BJ (cell line): ENCODE measurements at regions of chr11 and their contacts with region 1.

Region 1: GRCh38 chr11:59158206-59159068 is 13.5 kb upstream of the DTX4 start:
- DNase-seq: no peak
- H3K4me3 ChIP-seq: no peak overlapping the region
- H3K27me3 ChIP-seq: peaks cover 4% of the 10 kb centered on the region
- CTCF ChIP-seq: peak; percentile 76

Region 2: GRCh38 chr11:59053387-59053786 is 105.0 kb before region 1 on chr11:
- CTCF ChIA-PET with region 1: interaction called, 22 read pairs
- POLR2A ChIA-PET with region 1: no interaction called
- DNase-seq: no peak
- H3K4me3 ChIP-seq: no peak overlapping the region
- H3K27me3 ChIP-seq: 0 out of 2 replicates have a peak, but pooled peaks cover 2% of the 10 kb centered on the region
- CTCF ChIP-seq: peak; percentile 75

Region 3: DNA sequence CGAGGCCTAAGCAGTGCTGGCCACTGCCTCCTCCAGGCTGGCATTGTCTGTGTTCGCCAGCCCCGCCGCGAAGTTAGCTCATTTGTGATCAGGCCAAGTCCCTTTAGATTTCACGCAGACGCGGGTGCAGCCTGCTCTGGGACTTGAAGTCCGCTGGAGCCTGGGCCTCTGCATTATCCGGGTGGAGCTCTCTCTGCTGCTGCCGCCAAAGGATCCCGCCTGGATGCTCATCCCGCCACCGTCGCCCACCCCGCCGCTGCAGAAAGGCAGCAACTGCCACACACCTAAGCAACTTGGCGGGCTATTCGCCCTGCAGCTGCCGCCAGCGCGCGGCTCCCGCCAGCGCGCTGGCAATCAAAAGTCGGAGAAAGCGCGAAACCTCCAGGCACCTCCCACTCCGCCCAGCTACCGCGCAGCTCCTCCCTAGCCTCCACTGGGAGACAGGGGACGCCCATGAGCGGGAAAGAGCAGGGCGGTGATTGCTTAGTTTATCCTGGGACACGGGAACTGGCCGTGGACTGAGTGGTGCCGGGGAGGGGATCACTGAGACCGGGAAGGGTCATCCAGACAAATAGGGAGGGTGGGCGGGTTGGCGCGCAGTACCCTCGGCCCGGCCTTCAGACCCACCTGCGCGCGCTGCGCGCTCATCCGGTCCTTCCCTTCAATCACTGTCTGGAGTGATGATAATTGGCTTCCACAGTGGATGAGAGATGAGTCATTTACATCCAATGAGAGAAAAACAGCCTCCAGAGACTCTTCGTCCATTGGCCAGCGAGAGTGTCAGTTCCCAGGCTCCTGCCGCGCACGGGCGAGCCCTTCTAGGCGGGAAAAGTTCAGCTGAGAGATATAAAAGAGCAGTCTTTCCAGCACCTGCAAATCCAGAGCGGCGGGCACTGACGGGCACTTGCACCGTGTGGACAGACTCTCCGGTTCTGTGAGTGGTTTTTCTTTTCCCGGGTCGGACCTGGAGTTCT is 51.8 kb before region 1 on chr11 and contains the start of gene FAM111B:
- CTCF ChIA-PET with region 1: interaction called, 17 read pairs
- POLR2A ChIA-PET with region 1: no interaction called
- DNase-seq: peak; percentile 67
- H3K4me3 ChIP-seq: peak within 1 kb of the TSS; percentile 58
- H3K27me3 ChIP-seq: no peaks in the 10 kb centered on the region
- CTCF ChIP-seq: peak; percentile 32
- polyA plus RNA-seq, gene FAM111B: 0.76 and 1.9 TPM in 2 replicates

Region 4: GRCh38 chr11:59117774-59118173 is 40.7 kb before region 1 on chr11:
- CTCF ChIA-PET with region 1: no interaction called
- POLR2A ChIA-PET with region 1: no interaction called
- DNase-seq: no peak
- H3K4me3 ChIP-seq: no peak overlapping the region
- H3K27me3 ChIP-seq: no peaks in the 10 kb centered on the region
- CTCF ChIP-seq: no peak

Region 5: GRCh38 chr11:59142530-59143507 is 15.6 kb before region 1 on chr11 and contains the start of gene FAM111A:
- CTCF ChIA-PET with region 1: interaction called, 56 read pairs
- POLR2A ChIA-PET with region 1: no interaction called
- DNase-seq: peak; percentile 35
- H3K4me3 ChIP-seq: peak within 1 kb of the TSS; percentile 98
- H3K27me3 ChIP-seq: no peaks in the 10 kb centered on the region
- CTCF ChIP-seq: peak; percentile 32; the same call in 1 of the 2 replicates
- polyA plus RNA-seq, gene FAM111A: 19.7 and 30.3 TPM in 2 replicates

Region 6: GRCh38 chr11:59802639-59803176 is 644.3 kb after region 1 on chr11:
- CTCF ChIA-PET with region 1: no interaction called
- POLR2A ChIA-PET with region 1: no interaction called
- DNase-seq: no peak
- H3K4me3 ChIP-seq: no peak overlapping the region
- H3K27me3 ChIP-seq: no peaks in the 10 kb centered on the region
- CTCF ChIP-seq: peak; percentile 58